ENCODE measurements at regions of chr17 and their contacts with region 1.

Region 1: DNA sequence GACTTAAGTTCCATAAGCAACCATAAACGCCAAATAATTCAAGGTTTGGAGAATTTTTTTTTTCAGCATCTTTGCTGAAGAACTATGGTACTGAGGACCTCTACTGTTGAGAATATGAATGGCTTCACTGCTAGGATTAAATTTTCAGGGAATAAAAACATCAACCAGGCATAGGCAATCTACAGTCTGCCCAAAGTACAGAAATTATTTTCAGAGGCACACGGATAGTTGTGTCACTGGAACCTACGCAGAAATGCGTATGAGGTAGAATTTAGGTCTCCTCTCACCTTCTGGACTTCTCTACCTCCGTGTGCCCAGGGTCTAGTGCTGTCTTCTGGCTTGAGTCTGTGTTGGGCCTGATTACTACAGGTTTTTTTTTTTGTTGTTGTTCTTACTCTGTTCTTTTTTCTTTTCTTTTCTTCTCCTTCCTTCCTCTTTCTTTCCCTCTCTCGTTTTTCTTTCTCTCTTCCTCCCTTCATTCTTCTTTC is 39.7 kb downstream of the NACA2 start:
- H3K4me3 ChIP-seq: no peak overlapping the region
- H3K27ac ChIP-seq: no peak overlapping the region
- H3K4me1 ChIP-seq: no peaks in the 10 kb centered on the region
- CTCF ChIP-seq: peak; percentile 46; the same call in 1 of the 2 replicates

Region 2: GRCh38 chr17:61420052-61420451 is 131.2 kb before region 1 on chr17:
- CTCF ChIA-PET with region 1: interaction called, 32 read pairs
- POLR2A ChIA-PET with region 1: no interaction called
- H3K4me3 ChIP-seq: no peak overlapping the region
- H3K27ac ChIP-seq: no peak overlapping the region
- H3K4me1 ChIP-seq: no peaks in the 10 kb centered on the region; the same call in 1 of the 2 replicates
- CTCF ChIP-seq: no peak

Region 3: DNA sequence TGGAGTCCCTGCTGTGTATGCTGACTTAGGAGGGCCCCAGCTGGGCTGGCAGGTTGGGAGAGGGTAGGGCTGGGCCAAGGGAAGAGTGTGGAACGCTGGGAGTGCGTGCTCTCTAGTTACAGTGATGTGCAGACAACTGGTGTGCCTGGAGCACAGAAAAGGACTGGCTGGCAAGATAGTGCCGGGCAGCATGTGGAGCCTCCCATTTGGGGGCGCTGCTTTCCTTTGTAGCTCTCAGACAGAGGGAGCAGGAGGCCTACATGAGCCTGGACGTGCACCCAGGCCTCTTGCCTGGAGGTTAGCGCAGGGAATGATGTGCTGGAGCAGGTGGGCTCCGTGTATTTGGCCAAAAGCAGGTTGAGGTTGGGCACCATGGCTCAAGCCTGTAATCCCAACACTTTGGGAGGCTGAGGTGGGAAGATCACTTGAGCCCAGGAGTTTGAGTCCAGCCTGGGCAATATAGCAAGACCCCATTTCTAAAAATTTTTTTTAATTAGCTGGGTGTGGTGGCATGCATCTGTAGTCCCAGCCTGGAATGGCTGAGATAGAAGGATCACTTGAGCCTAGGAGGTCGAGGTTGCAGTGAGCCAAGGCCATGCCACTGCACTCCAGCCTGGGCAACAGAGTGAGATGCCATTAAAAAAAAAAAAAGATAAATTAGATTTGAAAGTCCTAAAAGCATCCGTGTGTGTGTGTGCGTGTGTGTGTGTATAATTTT is 125.1 kb before region 1 on chr17:
- CTCF ChIA-PET with region 1: interaction called, 20 read pairs
- POLR2A ChIA-PET with region 1: no interaction called
- H3K4me3 ChIP-seq: no peak overlapping the region
- H3K27ac ChIP-seq: no peak overlapping the region
- H3K4me1 ChIP-seq: no peaks in the 10 kb centered on the region
- CTCF ChIP-seq: no peak

Region 4: DNA sequence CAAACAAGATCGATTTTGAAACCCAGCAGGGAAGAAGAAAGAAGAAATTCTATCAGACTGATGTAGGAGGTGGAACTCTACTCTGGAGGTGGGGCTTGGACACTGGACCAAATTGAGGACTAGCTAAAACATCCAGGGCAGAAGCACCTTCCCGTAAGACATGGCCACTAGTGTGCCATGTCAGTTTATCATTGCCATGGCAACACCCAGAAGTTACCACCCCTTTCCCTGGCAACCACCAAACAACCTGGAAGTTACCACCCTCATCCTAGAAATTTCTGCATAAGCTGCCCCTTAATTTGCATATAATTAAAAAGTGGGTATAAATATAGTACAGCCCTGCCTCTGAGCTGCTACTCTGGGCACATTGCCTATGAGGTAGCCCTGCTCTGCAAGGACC is 27.0 kb before region 1 on chr17:
- CTCF ChIA-PET with region 1: interaction called, 14 read pairs
- POLR2A ChIA-PET with region 1: interaction called, 6 read pairs
- H3K4me3 ChIP-seq: no peak overlapping the region
- H3K27ac ChIP-seq: no peak overlapping the region
- H3K4me1 ChIP-seq: no peaks in the 10 kb centered on the region
- CTCF ChIP-seq: no peak

Region 5: DNA sequence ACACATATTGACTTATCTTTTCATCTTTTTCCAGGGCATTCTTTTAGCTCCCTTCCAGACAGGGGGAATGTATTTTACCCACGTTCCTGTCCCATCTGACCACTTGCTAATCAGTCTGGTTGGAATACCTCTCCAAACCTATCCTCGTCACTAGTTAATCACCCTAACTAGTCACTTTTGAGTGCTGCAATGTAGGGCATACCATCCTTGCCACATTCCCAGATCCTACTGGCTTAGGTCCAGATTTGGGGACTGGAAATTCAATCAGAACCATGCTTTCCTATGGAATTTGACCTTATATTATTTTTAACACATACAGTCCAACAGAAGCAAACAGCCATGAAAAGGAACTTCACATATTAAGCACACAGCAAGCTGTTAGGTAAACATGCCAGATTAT is 10.0 kb after region 1 on chr17:
- CTCF ChIA-PET with region 1: no interaction called
- POLR2A ChIA-PET with region 1: no interaction called
- H3K4me3 ChIP-seq: no peak overlapping the region
- H3K27ac ChIP-seq: no peak overlapping the region
- H3K4me1 ChIP-seq: no peaks in the 10 kb centered on the region
- CTCF ChIP-seq: no peak

Measured in HEK293 (cell line).